ENCODE measurements at regions of chr7 and their contacts with region 1.

Region 1: DNA sequence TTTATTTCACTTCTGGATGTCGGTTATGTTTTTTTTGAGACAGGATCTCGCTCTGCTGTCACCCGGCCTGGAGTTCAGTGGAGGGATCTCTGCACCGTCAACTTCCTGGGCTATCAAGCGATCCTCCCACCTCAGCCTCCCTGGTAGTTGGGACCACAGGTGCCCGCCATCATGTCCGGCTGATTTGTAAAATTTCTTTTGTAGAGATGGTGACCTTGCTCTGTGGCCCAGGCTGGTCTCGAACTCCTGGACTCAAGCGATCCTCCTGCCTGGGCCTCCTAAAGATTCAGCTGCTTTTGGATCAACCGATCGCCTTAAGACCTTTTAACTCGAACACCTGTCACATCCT is 606 bp upstream of the RABGEF1 start:
- DNase-seq: no peak

Region 2: GRCh38 chr7:66681491-66682349 is 58.2 kb before region 1 on chr7:
- intact Hi-C with region 1: loop called in 1 of 2 experiments (anchors 10 kb)
- DNase-seq: peak; percentile 99

Measured in posterior vena cava (tissue), 2 donors.